Calu3 (cell line): ENCODE measurements at regions of chr7 and their contacts with region 1.

Region 1: GRCh38 chr7:123682690-123683089 is 27.0 kb downstream of the LMOD2 start:
- DNase-seq: peak; percentile 24
- H3K4me3 Mint-ChIP-seq: no peak overlapping the region
- H3K27ac Mint-ChIP-seq: no peak overlapping the region
- H3K4me1 Mint-ChIP-seq: no peaks in the 10 kb centered on the region
- H3K27me3 Mint-ChIP-seq: no peaks in the 10 kb centered on the region
- CTCF ChIP-seq: peak; percentile 21

Region 2: GRCh38 chr7:123635551-123636359 is 46.9 kb before region 1 on chr7:
- CTCF ChIA-PET with region 1: no interaction called
- intact Hi-C with region 1: loop called (anchors 1 kb)
- DNase-seq: no peak
- H3K4me3 Mint-ChIP-seq: no peak overlapping the region
- H3K27ac Mint-ChIP-seq: no peak overlapping the region
- H3K4me1 Mint-ChIP-seq: peaks cover 8% of the 10 kb centered on the region
- H3K27me3 Mint-ChIP-seq: no peaks in the 10 kb centered on the region
- CTCF ChIP-seq: peak; percentile 35

Region 3: GRCh38 chr7:123748734-123749536 is 66.2 kb after region 1 on chr7 and contains the start of gene WASL:
- CTCF ChIA-PET with region 1: no interaction called
- intact Hi-C with region 1: loop called (anchors 5 kb)
- DNase-seq: peak; percentile 95
- H3K4me3 Mint-ChIP-seq: peak within 1 kb of the TSS; percentile 91
- H3K27ac Mint-ChIP-seq: peak within 1 kb of the TSS; percentile 75
- H3K4me1 Mint-ChIP-seq: peaks cover 45% of the 10 kb centered on the region
- H3K27me3 Mint-ChIP-seq: no peaks in the 10 kb centered on the region
- CTCF ChIP-seq: no peak
- total RNA-seq, gene WASL: 33.2 and 37.5 TPM in 2 replicates

Region 4: GRCh38 chr7:123865517-123866117 is 182.9 kb after region 1 on chr7:
- CTCF ChIA-PET with region 1: interaction called, 8 read pairs
- intact Hi-C with region 1: loop called (anchors 1 kb)
- DNase-seq: peak; percentile 69
- H3K4me3 Mint-ChIP-seq: no peak overlapping the region
- H3K27ac Mint-ChIP-seq: no peak overlapping the region
- H3K4me1 Mint-ChIP-seq: peaks cover 29% of the 10 kb centered on the region
- H3K27me3 Mint-ChIP-seq: peaks cover 15% of the 10 kb centered on the region
- CTCF ChIP-seq: peak; percentile 59